Naive thymus-derived CD4-positive, alpha-beta T cell (primary cell): ENCODE measurements at regions of chr12 and their contacts with region 1.

Region 1: GRCh38 chr12:66776974-66777373 is 98.1 kb upstream of the GRIP1 start:
- DNase-seq: peak in 7 of 9 donors; percentile 16 to 63 (median 50)
- ATAC-seq: peak; percentile 91
- H3K4me3 ChIP-seq: no peak overlapping the region
- H3K4me3 Mint-ChIP-seq: peak overlapping the region; percentile 5 to 80 (median 63)
- H3K27ac ChIP-seq: no peak overlapping the region
- H3K27ac Mint-ChIP-seq: peak overlapping the region; percentile 78 to 91 (median 87)
- H3K4me1 ChIP-seq: peaks cover 10 to 17% of the 10 kb centered on the region in 2 donors
- H3K4me1 Mint-ChIP-seq: peaks cover 16 to 38% (median 24%) of the 10 kb centered on the region in 7 donors
- H3K27me3 ChIP-seq: no peaks in the 10 kb centered on the region
- H3K27me3 Mint-ChIP-seq: peaks cover 0 to 70% (median 0%) of the 10 kb centered on the region in 5 donors

Region 2: GRCh38 chr12:66717036-66717673 is 59.8 kb before region 1 on chr12:
- CTCF ChIA-PET with region 1: no interaction called
- POLR2A ChIA-PET with region 1: no interaction called
- intact Hi-C with region 1: loop called in 1 of 2 experiments (anchors 5 kb)
- DNase-seq: no peak
- ATAC-seq: no peak
- H3K4me3 ChIP-seq: no peak overlapping the region
- H3K4me3 Mint-ChIP-seq: no peak overlapping the region
- H3K27ac ChIP-seq: no peak overlapping the region
- H3K27ac Mint-ChIP-seq: peak overlapping the region in 1 of 9 donors; percentile 97
- H3K4me1 ChIP-seq: peaks cover 0 to 18% of the 10 kb centered on the region in 2 donors
- H3K4me1 Mint-ChIP-seq: peaks cover 8 to 40% (median 25%) of the 10 kb centered on the region in 7 donors
- H3K27me3 ChIP-seq: no peaks in the 10 kb centered on the region
- H3K27me3 Mint-ChIP-seq: peaks cover 0 to 19% (median 0%) of the 10 kb centered on the region in 5 donors

Region 3: DNA sequence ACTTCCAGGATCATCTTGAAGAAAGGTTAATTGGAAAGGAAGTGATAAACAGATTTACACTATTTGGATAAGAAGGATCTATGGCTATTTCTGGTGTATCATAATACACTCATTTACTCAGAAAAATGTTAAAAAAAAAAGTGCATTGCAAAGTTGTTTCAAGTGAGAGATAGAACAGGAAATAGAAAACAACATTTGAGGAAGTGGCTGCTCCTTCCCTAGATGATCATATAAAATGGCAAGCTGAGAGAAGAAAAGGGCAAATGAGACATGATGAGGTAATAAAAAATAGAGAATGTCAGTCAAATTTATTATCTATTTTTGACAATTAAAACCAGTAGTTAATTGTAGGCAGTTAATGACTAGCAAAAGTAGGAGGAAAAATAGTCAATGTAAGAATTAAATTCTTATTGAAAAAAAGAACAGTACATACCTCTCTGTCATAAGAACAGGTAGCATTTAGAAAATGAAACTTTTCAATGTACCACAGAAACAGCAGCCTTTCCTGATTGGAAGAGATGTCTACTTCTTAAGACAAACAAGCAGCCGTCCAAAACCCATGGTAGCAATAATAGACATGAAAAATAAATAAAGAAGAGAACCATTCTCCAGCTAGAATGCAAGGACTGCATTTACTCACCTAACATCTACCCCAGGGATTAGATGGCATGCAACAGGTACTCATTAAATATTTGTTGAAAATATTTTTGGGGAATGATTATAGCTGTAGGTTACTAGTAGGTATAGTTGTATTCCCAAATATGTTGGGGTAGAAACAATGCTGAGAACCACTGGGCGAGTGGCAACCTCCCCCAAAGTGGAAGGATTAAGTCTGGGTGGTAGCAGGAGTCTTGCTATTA is 34.2 kb before region 1 on chr12:
- CTCF ChIA-PET with region 1: no interaction called
- POLR2A ChIA-PET with region 1: interaction called, 4 read pairs
- intact Hi-C with region 1: loop called in 1 of 2 experiments (anchors 2 kb)
- DNase-seq: peak in 6 of 9 donors; percentile 4 to 38 (median 25)
- ATAC-seq: no peak
- H3K4me3 ChIP-seq: no peak overlapping the region
- H3K4me3 Mint-ChIP-seq: peak overlapping the region in 8 of 10 donors; percentile 3 to 74 (median 38)
- H3K27ac ChIP-seq: no peak overlapping the region
- H3K27ac Mint-ChIP-seq: peak overlapping the region in 8 of 9 donors; percentile 7 to 83 (median 60)
- H3K4me1 ChIP-seq: peaks cover 4 to 17% of the 10 kb centered on the region in 2 donors
- H3K4me1 Mint-ChIP-seq: peaks cover 7 to 30% (median 24%) of the 10 kb centered on the region in 7 donors
- H3K27me3 ChIP-seq: no peaks in the 10 kb centered on the region
- H3K27me3 Mint-ChIP-seq: peaks cover 0 to 19% (median 0%) of the 10 kb centered on the region in 5 donors

Region 4: GRCh38 chr12:66829660-66830325 is 52.8 kb after region 1 on chr12:
- CTCF ChIA-PET with region 1: no interaction called
- POLR2A ChIA-PET with region 1: no interaction called
- intact Hi-C with region 1: loop called in 1 of 2 experiments (anchors 5 kb)
- DNase-seq: peak in 5 of 9 donors; percentile 22 to 39 (median 30)
- ATAC-seq: peak; percentile 78
- H3K4me3 ChIP-seq: no peak overlapping the region
- H3K4me3 Mint-ChIP-seq: peak overlapping the region; percentile 22 to 79 (median 68)
- H3K27ac ChIP-seq: no peak overlapping the region
- H3K27ac Mint-ChIP-seq: peak overlapping the region; percentile 40 to 93 (median 76)
- H3K4me1 ChIP-seq: peaks cover 6 to 31% of the 10 kb centered on the region in 2 donors
- H3K4me1 Mint-ChIP-seq: peaks cover 9 to 56% (median 50%) of the 10 kb centered on the region in 7 donors
- H3K27me3 ChIP-seq: no peaks in the 10 kb centered on the region
- H3K27me3 Mint-ChIP-seq: peaks cover 0 to 4% (median 0%) of the 10 kb centered on the region in 5 donors

Region 5: DNA sequence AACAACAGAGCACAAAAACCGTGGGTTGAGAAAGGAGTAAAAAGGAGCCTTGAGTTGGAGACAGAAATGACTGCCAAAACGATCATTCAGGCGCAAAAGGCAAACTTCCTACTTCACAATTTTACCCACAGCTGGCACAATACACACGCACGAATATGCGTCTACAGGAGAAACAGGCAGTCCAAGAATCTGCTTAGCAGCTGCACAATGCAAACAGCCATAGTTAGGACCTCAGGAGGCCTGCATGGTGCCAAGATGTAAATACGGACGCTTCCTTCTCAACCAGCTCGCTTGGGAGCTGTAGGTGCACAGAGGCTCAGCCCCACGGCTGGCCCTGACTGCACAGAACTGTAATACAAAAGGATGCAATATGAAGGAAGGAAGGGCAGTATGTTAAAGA is 242.1 kb after region 1 on chr12:
- CTCF ChIA-PET with region 1: no interaction called
- POLR2A ChIA-PET with region 1: no interaction called
- intact Hi-C with region 1: no loop called
- DNase-seq: no peak
- ATAC-seq: no peak
- H3K4me3 ChIP-seq: no peak overlapping the region
- H3K4me3 Mint-ChIP-seq: no peak overlapping the region
- H3K27ac ChIP-seq: no peak overlapping the region
- H3K27ac Mint-ChIP-seq: no peak overlapping the region
- H3K4me1 ChIP-seq: no peaks in the 10 kb centered on the region
- H3K4me1 Mint-ChIP-seq: peaks cover 0 to 1% (median 0%) of the 10 kb centered on the region in 7 donors
- H3K27me3 ChIP-seq: no peaks in the 10 kb centered on the region
- H3K27me3 Mint-ChIP-seq: peaks cover 0 to 7% (median 2%) of the 10 kb centered on the region in 5 donors